ENCODE measurements at regions of chr4 and their contacts with region 1.

Region 1: DNA sequence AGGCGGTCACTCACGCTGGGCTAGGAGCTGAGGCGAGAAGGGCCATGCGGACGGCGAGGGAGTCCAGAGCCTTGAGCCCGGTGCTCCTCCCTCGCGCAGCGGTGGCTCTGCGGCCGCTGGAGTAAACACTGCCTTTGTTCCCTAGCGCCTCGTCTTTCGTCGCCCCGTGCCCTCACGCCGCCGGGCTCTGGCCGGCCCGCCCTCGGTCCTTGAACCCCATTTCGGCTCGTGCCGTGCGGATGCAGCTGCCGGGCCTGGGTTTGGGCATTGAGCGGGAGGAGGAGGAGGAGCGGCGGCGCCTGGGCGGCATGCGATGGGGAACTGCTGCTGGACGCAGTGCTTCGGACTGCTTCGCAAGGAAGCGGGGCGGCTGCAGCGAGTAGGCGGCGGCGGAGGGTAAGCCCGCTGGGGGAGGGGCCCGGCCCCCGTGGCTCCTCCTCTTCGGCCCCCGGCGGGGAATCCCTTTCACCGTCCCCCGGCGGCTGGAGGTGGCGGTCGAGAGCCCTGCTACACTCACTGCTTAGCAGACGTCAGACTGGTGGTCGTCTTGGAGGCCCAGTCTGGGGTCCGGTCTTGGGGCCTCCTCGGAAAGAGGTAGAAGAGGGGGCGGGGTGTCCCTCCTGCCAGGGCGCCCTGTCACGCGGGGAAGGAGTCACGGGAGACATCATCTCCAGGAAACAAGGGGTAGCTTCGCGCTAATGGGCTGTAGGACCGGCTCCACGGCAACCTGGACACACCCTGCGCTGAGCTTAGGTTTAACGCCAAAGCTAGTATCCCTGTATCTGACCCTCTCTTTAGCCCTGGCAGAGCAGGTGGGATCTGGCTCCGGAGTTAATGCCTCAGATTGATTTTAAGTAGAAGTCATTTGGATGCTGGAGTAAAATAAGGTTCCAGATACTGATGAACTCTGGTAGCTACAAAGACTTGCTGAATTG is at the start of gene AP1AR:
- DNase-seq: peak; percentile 83 to 86
- H3K4me3 ChIP-seq: peak within 1 kb of the TSS; percentile 82 to 94
- H3K27ac ChIP-seq: peak within 1 kb of the TSS; percentile 88 to 99
- H3K4me1 ChIP-seq: no peaks in the 10 kb centered on the region
- H3K27me3 ChIP-seq: no peaks in the 10 kb centered on the region
- CTCF ChIP-seq: peak in 3 of 4 experiments; percentile 26 to 60 (median 47)
- POLR2A ChIP-seq: peak; percentile 77 to 90
- total RNA-seq, gene AP1AR: 2.3 to 37.7 (median 17.6) TPM

Region 2: GRCh38 chr4:112099701-112100297 is 132.2 kb before region 1 on chr4:
- intact Hi-C with region 1: loop called (anchors 10 kb)
- DNase-seq: no peak
- H3K4me3 ChIP-seq: no peak overlapping the region
- H3K27ac ChIP-seq: no peak overlapping the region
- H3K4me1 ChIP-seq: no peaks in the 10 kb centered on the region
- H3K27me3 ChIP-seq: no peaks in the 10 kb centered on the region
- CTCF ChIP-seq: peak; percentile 53 to 62 (median 60)
- POLR2A ChIP-seq: no peak

Measured in uterus (tissue), 4 donors.